Left colon (tissue), 2 donors: ENCODE measurements at regions of chr19 and their contacts with region 1.

Region 1: GRCh38 chr19:19643158-19644053 is at the start of gene GMIP:
- DNase-seq: peak; percentile 86 to 95
- ATAC-seq: peak; percentile 94
- total RNA-seq, gene GMIP: 29.5 to 34.4 TPM

Region 2: GRCh38 chr19:19531951-19532805 is 111.2 kb before region 1 on chr19:
- intact Hi-C with region 1: loop called (anchors 5 kb)
- DNase-seq: peak; percentile 51 to 91
- ATAC-seq: peak; percentile 72

Region 3: DNA sequence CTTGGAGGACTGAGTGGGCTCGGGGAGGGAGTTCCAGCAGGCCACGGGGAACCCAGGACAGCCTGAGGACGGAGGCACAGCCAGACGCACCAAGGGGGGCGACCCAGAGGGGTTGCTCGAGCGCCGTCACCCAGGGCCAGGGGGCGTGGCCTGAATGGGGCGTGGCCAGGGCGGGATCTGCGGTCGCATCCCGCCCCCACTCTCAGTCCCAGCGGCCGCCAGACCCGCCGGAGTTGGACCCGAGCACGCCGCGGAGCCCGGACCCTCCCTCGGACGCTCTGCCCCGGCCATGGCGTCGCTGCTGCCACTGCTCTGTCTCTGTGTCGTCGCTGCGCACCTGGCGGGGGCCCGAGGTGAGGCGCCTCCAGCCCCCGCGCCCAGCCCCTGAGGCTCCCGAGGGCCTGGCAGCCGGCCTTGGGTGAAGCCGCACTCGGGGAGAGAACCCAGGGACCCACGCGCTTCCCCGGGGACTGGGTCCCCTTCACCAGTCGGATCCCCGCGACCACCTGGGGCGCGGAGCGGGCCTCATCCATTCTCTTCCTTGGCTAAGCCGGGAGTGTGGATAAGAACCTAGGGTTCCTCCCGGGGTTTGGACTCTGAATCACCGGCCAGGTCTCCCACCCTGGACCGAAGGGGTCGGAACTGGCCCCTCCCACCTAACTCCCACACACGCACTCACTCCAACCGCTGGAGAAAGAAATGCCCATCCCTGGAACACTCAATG is 105.2 kb before region 1 on chr19 and contains the start of gene CILP2:
- intact Hi-C with region 1: loop called in 1 of 2 experiments (anchors 5 kb)
- DNase-seq: peak in 1 of 2 donors; percentile 67
- ATAC-seq: peak; percentile 32
- total RNA-seq, gene CILP2: 0.09 to 0.11 TPM

Region 4: GRCh38 chr19:19591133-19591825 is 52.1 kb before region 1 on chr19:
- intact Hi-C with region 1: no loop called
- DNase-seq: peak in 1 of 2 donors; percentile 47
- ATAC-seq: peak; percentile 35

Region 5: DNA sequence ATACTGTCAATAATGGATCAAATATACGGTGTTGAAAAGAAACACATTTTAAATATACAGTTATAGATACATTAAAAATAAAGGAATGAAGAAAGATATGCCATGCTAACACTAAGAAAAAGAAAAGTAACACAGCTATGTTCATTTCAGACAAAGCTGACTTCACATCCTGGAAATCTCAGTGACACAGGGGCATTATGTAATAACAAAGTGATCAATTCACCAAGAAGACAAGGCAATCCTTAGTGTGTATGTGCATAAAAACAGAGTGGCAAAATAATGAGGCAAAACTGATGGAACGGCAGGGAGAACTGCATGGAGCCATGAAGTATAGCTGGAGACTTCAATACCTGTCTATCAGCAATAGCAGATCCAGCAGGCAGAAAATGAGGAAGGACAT is 76.4 kb after region 1 on chr19:
- intact Hi-C with region 1: no loop called
- DNase-seq: no peak
- ATAC-seq: no peak

Region 6: DNA sequence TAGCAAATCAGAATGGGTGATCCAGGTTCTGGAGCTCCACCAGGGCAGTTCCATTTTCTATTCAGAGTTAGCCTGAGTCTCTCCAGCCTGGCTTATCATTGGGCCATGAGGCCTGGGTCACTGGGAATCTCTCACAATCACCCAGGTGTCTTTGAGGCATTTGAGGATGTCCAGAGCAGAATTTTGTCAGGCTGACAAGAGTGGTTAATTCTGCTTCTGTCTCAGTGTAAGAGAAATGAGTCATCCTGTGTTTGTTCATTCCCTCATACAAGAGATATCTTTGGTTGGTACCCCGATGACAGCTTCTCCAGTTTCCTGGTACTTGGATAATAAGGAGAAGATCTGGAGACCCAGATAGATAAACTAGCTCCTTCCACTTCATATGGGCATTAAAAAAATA is 267.7 kb after region 1 on chr19:
- intact Hi-C with region 1: no loop called
- DNase-seq: no peak
- ATAC-seq: no peak